Panc1 (cell line): ENCODE measurements at regions of chr11 and their contacts with region 1.

Region 1: DNA sequence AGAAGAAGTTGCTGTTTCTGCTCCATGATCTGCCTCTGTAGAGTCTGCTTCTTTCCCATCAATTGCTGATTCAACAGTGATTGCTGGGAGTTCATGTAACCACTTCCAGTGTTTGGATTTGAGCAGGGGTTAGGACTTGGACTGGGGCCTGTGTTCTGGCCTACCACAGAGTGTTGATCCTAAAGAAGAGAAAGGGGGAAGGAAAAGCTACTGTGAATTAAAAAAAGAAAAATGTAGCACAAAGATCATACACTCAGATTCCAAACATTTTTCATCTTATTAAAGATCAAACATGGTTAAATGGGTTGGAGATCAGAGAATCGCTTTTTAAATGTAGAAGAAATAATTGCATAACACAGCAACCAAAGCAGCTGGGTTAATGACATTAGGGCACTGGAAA is 67.6 kb upstream of the MTMR2 start:
- DNase-seq: no peak
- ATAC-seq: no peak
- H3K4me3 ChIP-seq: no peak overlapping the region
- H3K27ac ChIP-seq: no peak overlapping the region
- H3K4me1 ChIP-seq: no peaks in the 10 kb centered on the region
- H3K27me3 ChIP-seq: no peaks in the 10 kb centered on the region
- CTCF ChIP-seq: no peak

Region 2: DNA sequence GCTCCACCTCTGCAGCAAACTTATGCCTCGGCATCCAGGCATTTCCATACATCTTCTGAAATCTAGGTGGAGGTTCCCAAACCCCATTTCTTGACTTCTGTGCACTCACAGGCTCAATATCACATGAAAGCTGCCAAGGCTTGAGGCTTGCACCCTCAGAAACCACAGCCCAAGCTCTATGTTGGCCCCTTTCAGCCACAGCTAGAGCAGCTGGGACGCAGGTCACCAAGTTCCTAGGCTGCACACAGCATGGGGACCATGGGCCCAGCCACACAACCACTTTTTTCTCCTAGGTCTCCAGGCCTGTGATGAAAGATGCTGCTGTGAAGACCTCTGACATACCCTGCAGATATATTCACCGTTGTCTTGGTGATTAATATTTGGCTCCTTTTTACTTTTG is 42.9 kb before region 1 on chr11:
- CTCF ChIA-PET with region 1: no interaction called
- POLR2A ChIA-PET with region 1: interaction called, 10 read pairs
- in situ Hi-C with region 1: no loop called
- intact Hi-C with region 1: no loop called
- DNase-seq: no peak
- ATAC-seq: no peak
- H3K4me3 ChIP-seq: no peak overlapping the region
- H3K27ac ChIP-seq: no peak overlapping the region
- H3K4me1 ChIP-seq: no peaks in the 10 kb centered on the region
- H3K27me3 ChIP-seq: no peaks in the 10 kb centered on the region
- CTCF ChIP-seq: no peak

Region 3: DNA sequence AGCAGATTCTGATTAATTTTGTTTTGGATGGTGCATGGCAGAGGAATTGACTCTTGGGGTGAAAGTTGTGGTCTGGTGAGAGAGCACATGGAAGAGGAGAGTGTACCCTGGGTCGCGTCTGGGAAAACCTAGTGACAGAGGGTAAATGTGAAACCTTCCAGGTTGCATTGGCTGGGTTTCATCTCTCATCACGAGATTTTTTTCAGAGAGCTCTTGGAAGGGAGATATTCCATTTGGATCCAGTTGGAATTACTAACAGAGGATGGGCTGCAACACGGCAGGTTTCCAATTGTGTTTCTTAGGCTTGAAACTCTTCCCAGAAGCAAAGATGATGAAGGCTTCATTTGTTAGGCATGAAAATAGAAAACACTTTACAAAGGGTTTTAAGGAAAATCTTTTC is 42.1 kb after region 1 on chr11:
- CTCF ChIA-PET with region 1: no interaction called
- POLR2A ChIA-PET with region 1: interaction called, 10 read pairs
- in situ Hi-C with region 1: no loop called
- intact Hi-C with region 1: no loop called
- DNase-seq: no peak
- ATAC-seq: no peak
- H3K4me3 ChIP-seq: no peak overlapping the region
- H3K27ac ChIP-seq: no peak overlapping the region
- H3K4me1 ChIP-seq: peaks cover 9% of the 10 kb centered on the region; the same call in 1 of the 2 replicates
- H3K27me3 ChIP-seq: no peaks in the 10 kb centered on the region
- CTCF ChIP-seq: no peak